GM10248 (cell line): ENCODE measurements at regions of chr19 and their contacts with region 1.

Region 1: DNA sequence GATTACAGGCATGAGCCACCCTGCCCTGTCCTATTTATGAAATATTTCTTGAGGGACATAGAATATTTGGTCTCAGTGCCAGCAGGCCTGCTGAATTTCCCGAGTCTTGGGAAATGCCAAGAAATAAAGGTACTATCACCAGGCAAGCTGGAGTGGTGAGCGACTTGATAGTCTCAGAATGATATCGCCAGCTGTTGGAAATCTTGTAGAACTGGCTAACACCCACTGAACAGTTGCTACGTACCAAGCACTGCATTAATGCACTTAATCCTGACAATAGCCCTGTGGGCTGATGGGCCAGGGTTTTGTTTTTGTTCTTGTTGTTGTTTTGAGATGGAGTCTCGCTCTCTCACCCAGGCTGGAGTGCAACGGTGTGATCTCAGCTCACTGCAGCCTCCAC is 42.2 kb upstream of the MRI1 start:
- DNase-seq: no peak
- CTCF ChIP-seq: no peak

Region 2: GRCh38 chr19:13597640-13598039 is 124.5 kb before region 1 on chr19:
- CTCF ChIA-PET with region 1: interaction called, 10 read pairs
- POLR2A ChIA-PET with region 1: no interaction called
- DNase-seq: peak; percentile 86
- CTCF ChIP-seq: peak; percentile 57